ENCODE measurements at regions of chr2 and their contacts with region 1.

Region 1: GRCh38 chr2:224369028-224369632 is 32.8 kb downstream of the FAM124B start:
- DNase-seq: no peak
- H3K4me3 ChIP-seq: no peak overlapping the region
- H3K27ac ChIP-seq: no peak overlapping the region
- H3K4me1 ChIP-seq: no peaks in the 10 kb centered on the region
- H3K27me3 ChIP-seq: no peaks in the 10 kb centered on the region
- CTCF ChIP-seq: peak in 3 of 4 experiments; percentile 38 to 57 (median 45)
- POLR2A ChIP-seq: no peak

Region 2: GRCh38 chr2:223993621-223994232 is 375.4 kb before region 1 on chr2:
- intact Hi-C with region 1: loop called (anchors 10 kb)
- DNase-seq: peak; percentile 60
- H3K4me3 ChIP-seq: no peak overlapping the region
- H3K27ac ChIP-seq: no peak overlapping the region
- H3K4me1 ChIP-seq: no peaks in the 10 kb centered on the region
- H3K27me3 ChIP-seq: no peaks in the 10 kb centered on the region
- CTCF ChIP-seq: peak; percentile 68 to 89 (median 75)
- POLR2A ChIP-seq: no peak

Region 3: DNA sequence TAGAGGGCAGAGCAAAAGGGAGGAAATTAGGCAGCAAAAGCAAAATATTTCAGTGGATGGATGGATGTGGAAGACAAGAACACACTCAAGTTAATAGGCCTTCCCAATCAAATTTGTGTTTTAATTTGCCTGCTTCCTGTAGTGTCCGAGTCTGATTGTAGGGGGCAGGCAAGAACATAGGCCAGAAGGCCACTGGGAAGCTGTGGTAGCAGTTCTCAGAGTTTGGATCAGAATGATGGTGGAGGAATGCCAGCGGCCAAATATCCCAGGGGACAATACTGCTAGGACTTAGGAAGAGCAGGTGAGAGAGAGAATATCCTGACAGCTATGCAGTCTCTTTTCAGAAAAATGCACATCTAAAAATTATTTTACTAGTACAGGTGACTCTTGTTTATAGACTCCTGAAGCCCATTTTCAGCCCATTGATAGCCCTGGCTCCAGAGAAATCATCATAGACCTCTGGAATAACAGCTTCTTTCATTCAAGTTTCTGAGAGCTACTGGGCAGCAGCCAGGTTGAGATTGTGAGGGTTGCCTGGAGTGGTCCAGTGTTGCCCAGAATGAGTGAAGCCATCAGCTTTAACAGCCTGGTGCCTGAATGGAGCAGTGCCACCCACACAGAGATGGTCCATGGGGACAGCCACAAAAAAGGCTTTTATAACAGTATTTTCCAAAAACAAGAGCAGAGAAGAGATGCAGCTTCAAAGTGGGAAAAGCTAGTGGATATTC is 310.9 kb before region 1 on chr2:
- intact Hi-C with region 1: no loop called
- DNase-seq: no peak
- H3K4me3 ChIP-seq: no peak overlapping the region
- H3K27ac ChIP-seq: no peak overlapping the region
- H3K4me1 ChIP-seq: no peaks in the 10 kb centered on the region
- H3K27me3 ChIP-seq: no peaks in the 10 kb centered on the region
- CTCF ChIP-seq: no peak
- POLR2A ChIP-seq: no peak

Region 4: DNA sequence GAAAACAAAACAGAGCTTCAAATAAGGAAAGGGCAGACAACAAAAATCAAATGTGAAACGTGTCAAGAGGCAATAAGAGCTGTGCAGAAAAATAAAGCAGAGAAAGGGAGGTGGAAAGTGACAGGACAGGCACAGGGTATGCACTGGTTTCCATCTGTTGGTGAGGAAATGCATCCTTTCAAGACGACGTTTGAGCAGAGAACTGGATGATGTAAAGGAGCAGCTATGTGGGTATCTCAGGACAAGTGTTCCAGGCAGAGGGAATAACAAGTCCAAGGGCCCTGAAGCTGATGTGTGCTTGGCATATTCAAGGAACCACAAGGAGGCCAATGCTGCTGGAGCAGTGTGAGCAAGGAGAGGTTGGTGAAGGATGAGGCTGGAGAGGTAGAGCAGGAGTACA is 161.1 kb before region 1 on chr2:
- intact Hi-C with region 1: no loop called
- DNase-seq: no peak
- H3K4me3 ChIP-seq: no peak overlapping the region
- H3K27ac ChIP-seq: no peak overlapping the region
- H3K4me1 ChIP-seq: no peaks in the 10 kb centered on the region
- H3K27me3 ChIP-seq: no peaks in the 10 kb centered on the region
- CTCF ChIP-seq: no peak
- POLR2A ChIP-seq: no peak

Region 5: GRCh38 chr2:224778474-224778877 is 409.3 kb after region 1 on chr2:
- intact Hi-C with region 1: loop called (anchors 10 kb)
- DNase-seq: peak; percentile 25
- H3K4me3 ChIP-seq: no peak overlapping the region
- H3K27ac ChIP-seq: no peak overlapping the region
- H3K4me1 ChIP-seq: no peaks in the 10 kb centered on the region
- H3K27me3 ChIP-seq: no peaks in the 10 kb centered on the region
- CTCF ChIP-seq: peak; percentile 29 to 71 (median 56)
- POLR2A ChIP-seq: no peak

Measured in prostate gland (tissue), 2 donors.